ENCODE measurements at regions of chr4 and their contacts with region 1.

Region 1: GRCh38 chr4:40199999-40200874 is 3.4 kb downstream of the RHOH start:
- DNase-seq: peak; percentile 62 to 87 (median 66)
- H3K4me3 ChIP-seq: peak overlapping the region; percentile 84 to 98
- H3K4me3 Mint-ChIP-seq: peak overlapping the region; percentile 95 to 100 (median 98)
- H3K27ac ChIP-seq: peak overlapping the region; percentile 99
- H3K27ac Mint-ChIP-seq: peak overlapping the region; percentile 98 to 100 (median 100)
- H3K4me1 ChIP-seq: peaks cover 44% of the 10 kb centered on the region
- H3K4me1 Mint-ChIP-seq: peaks cover 30 to 82% (median 38%) of the 10 kb centered on the region in 4 donors
- H3K27me3 ChIP-seq: no peaks in the 10 kb centered on the region
- H3K27me3 Mint-ChIP-seq: no peaks in the 10 kb centered on the region

Region 2: DNA sequence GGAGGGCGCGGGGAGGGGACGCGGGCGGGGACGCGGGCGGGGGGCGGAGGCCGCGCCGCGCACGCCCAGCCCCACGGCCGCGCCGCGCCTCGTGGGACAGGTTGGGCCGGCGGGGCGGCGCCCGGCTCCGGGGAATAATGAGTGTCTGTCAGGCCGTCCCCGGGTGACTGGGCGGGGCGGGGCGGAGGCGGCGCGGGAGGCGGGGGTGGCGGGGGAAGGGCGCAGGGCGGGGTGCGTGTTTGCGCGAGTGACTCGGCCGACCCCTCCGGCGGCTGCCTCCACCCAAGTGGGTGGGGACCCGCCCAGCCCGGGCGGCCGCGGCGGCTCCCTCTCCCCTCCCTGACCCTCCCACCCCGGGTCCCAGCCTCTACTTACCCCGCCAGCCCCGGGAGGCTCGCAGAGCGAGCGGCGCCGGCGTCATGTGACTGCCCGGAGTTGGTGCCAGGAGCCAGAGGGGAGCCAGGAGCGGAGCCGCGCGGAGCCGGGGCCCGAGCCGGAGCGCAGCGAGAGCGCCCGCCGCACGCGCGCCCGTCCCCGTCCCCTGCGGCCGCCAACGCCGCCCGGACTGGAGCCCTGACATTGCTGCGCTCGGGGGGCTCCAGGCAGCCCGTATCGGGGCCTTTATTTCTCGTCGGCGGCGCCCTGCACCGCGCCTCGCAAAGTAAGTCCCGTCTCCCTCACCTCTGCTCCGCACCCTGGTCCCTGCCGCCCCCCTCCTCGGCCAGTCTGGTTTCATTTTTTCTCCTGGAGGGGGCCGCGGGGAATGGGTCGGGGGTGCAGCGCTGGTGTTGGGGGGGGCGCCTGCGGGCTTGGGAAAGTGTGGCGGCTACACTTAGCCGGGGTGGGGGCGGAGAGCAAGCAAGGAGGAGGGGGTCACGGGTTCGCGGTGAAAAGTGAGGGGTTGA is 1536.2 kb before region 1 on chr4 and contains the start of gene KLF3:
- CTCF ChIA-PET with region 1: no interaction called
- POLR2A ChIA-PET with region 1: interaction called, 3 read pairs
- intact Hi-C with region 1: loop called (anchors 10 kb)
- DNase-seq: peak; percentile 93 to 96 (median 94)
- H3K4me3 ChIP-seq: peak within 1 kb of the TSS; percentile 83 to 92
- H3K4me3 Mint-ChIP-seq: peak within 1 kb of the TSS; percentile 89 to 100 (median 98)
- H3K27ac ChIP-seq: peak within 1 kb of the TSS; percentile 92
- H3K27ac Mint-ChIP-seq: peak within 1 kb of the TSS; percentile 91 to 100 (median 99)
- H3K4me1 ChIP-seq: peaks cover 46% of the 10 kb centered on the region
- H3K4me1 Mint-ChIP-seq: peaks cover 40 to 80% (median 56%) of the 10 kb centered on the region in 4 donors
- H3K27me3 ChIP-seq: no peaks in the 10 kb centered on the region
- H3K27me3 Mint-ChIP-seq: no peaks in the 10 kb centered on the region
- total RNA-seq, gene KLF3: 119 to 122 TPM

Region 3: DNA sequence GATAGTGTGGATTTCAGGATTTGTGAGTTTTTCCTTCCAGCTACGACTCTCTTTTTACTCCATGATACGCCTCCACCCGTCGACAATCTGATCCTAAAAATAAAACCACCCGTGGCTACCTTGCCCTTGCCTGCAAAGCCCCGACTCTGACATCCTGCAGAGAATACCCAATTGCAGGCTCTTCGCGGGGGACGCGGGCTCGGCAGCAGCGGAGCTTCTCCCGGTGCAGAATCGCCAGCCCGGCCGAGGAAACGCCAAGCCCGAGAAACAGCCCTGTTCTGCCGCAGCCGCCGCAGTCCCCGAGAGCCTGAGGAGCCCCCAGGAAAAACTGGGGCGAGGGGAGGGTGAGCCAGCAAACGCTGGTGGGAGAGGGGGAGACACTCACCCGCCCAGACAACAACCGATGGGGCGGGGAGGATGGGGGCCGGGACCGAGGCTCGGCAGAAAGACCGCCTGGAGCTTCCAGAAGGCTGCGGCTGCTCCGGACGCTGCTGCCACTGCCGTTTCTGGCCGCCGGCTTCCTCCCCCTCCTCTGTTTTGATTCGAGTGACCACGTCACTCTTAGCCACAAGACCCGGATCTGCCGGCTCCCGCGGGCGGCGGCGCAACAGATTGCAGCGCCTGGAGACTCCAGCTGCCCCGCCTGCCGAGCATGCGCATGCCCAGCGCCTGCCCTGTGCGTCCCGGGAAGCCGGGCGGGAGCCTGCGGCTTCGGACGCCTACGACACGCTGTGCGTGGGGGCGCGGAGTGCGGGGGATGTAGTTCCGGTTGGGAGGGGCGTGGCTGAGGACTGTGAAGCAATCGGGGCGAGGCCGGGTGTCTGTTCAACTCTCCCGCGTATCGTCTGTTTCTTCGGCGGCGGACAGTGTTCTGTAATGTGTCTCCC is 561.6 kb before region 1 on chr4 and contains the start of gene SMIM14:
- CTCF ChIA-PET with region 1: no interaction called
- POLR2A ChIA-PET with region 1: no interaction called
- intact Hi-C with region 1: loop called (anchors 10 kb)
- DNase-seq: peak; percentile 84 to 91 (median 86)
- H3K4me3 ChIP-seq: peak within 1 kb of the TSS; percentile 52 to 95
- H3K4me3 Mint-ChIP-seq: peak within 1 kb of the TSS; percentile 87 to 99 (median 92)
- H3K27ac ChIP-seq: peak within 1 kb of the TSS; percentile 77
- H3K27ac Mint-ChIP-seq: peak within 1 kb of the TSS; percentile 74 to 98 (median 96)
- H3K4me1 ChIP-seq: peaks cover 27% of the 10 kb centered on the region
- H3K4me1 Mint-ChIP-seq: peaks cover 20 to 54% (median 32%) of the 10 kb centered on the region in 4 donors
- H3K27me3 ChIP-seq: no peaks in the 10 kb centered on the region
- H3K27me3 Mint-ChIP-seq: no peaks in the 10 kb centered on the region
- total RNA-seq, gene SMIM14: 15.5 to 19.4 TPM

Region 4: DNA sequence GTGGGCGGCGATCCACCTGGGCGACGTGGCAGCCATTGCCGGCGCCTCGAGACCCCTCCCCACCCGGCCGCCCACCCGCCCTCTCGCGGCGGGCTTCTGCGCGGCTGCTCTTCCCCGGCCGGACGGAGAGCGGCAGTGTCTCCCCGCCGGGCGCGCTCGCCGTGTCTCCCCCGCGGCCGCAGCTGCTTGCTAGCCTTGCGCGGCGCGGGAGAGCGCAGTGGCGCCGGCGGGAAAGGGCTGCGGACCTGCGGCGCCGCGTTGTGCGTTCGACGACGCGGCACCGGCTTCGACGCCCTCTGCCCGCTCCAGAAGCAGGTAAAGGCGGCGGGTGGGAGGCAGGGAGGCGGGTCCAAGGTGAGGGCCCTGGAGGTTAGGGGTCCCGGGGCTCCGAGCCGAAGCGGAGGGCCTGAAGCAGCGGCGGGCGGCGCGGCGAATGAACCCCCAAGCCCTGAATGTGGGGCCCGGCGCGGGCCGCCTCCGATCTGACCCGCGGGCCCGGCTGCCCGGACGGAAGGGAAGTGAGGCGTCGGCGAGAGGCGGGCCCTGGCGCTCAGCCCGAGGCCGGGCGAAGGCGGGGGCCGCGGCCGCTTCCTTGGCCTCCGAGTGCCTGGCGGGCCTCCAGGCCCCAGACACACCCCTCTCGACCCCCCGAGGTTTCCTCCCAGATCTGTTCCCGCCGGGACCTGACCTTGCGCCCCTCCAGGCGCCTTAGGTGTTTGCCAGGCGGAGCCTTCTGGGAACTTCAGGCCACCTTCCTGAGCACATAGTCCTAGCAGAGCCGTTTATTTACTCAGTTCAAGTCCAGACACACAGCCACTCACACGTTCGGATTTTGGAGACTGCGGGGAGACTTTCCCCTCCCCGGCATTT is 143.3 kb before region 1 on chr4 and contains the start of gene N4BP2:
- CTCF ChIA-PET with region 1: interaction called, 3 read pairs
- POLR2A ChIA-PET with region 1: interaction called, 28 read pairs
- intact Hi-C with region 1: loop called (anchors 5 kb)
- DNase-seq: peak; percentile 60 to 78 (median 75)
- H3K4me3 ChIP-seq: peak within 1 kb of the TSS; percentile 82 to 100
- H3K4me3 Mint-ChIP-seq: peak within 1 kb of the TSS; percentile 93 to 99 (median 97)
- H3K27ac ChIP-seq: peak within 1 kb of the TSS; percentile 75
- H3K27ac Mint-ChIP-seq: peak within 1 kb of the TSS; percentile 93 to 99 (median 97)
- H3K4me1 ChIP-seq: peaks cover 36% of the 10 kb centered on the region
- H3K4me1 Mint-ChIP-seq: peaks cover 18 to 48% (median 32%) of the 10 kb centered on the region in 4 donors
- H3K27me3 ChIP-seq: no peaks in the 10 kb centered on the region
- H3K27me3 Mint-ChIP-seq: no peaks in the 10 kb centered on the region
- total RNA-seq, gene N4BP2: 15.0 to 16.7 TPM

Region 5: DNA sequence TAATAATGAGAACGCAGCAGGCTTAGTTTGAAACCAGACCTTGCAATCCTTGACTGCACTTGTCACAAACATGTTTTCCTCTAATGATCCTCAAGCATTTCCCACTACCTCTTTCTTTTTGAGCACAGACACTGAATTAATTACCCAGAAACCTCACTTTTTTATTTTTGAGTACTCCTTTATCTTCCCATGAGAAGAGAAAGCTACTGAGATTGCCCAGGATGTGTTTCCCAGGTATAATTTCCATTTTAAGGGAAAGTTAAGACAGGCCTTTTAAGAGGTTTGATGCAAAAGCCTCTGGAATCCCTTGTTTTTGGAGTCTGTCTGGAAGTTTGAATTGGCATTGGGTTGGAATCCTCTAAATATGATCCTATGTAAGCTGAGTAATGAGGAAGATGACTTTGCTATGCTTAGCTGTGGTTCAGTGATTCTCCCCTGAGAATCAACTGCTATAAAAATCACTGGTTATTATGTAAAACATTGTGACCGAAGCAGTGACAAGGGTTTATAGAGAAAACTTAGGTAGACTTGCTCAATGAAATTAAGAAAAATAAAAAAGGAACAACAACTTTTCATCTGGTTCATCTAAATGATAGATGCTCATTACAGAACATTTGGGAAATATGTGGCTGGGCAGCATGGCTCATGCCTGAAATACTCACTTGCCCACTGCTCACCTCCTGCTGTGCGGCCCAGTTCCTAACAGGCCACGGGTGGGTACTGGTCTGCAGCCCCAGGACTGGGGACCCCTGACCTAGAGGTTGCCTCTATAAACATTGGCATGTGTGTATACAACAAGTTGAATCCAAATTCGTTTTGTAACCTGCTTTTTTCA is 14.2 kb before region 1 on chr4:
- CTCF ChIA-PET with region 1: interaction called, 8 read pairs
- POLR2A ChIA-PET with region 1: interaction called, 357 read pairs
- intact Hi-C with region 1: no loop called
- DNase-seq: no peak
- H3K4me3 ChIP-seq: no peak overlapping the region
- H3K4me3 Mint-ChIP-seq: peak overlapping the region in 2 of 8 donors; percentile 20 to 26
- H3K27ac ChIP-seq: no peak overlapping the region
- H3K27ac Mint-ChIP-seq: peak overlapping the region in 3 of 7 donors; percentile 32 to 71 (median 57)
- H3K4me1 ChIP-seq: peaks cover 44% of the 10 kb centered on the region
- H3K4me1 Mint-ChIP-seq: peaks cover 31 to 45% (median 36%) of the 10 kb centered on the region in 4 donors
- H3K27me3 ChIP-seq: no peaks in the 10 kb centered on the region
- H3K27me3 Mint-ChIP-seq: no peaks in the 10 kb centered on the region

Region 6: DNA sequence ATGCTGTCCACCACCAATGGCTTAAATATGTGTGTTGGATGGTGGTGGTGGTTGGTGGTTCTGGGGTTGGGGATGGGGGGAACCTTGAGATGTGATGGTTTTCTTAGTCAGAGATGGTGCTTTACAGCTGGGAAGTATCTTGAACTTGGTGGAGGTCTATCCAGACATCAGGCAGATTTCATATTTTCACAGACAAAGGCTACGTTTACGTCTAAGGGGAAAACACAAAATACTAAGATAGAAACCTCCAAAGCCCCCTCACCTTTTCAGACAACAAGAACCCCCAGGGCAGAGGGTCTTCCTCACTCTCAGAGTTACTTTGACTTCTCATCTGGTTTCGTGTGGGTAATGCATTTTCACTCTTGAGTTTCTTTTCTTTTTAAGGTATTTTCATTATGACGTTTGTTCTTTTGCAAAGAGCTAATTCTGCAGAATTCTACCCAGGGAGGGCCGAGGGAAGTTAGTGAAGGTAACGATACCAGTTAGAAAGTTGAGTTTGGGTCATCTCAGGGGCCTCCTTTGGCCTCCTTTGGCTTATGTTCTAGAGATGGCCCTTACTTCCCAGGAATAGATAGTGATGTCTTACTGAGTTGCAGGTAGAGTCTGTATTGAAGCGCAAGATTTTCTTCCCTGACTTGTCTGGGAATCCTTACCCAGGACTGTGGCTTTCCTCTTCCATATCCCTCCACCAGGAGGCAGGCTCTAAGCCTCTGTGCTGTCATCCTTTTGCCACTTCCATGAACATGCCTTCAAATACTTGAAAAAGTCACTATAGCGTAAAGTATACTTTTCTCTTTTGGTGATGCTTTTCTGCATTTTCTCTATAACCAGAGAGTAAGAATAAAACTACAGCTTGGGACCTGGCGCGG is 28.5 kb after region 1 on chr4:
- CTCF ChIA-PET with region 1: interaction called, 93 read pairs
- POLR2A ChIA-PET with region 1: interaction called, 1,182 read pairs
- intact Hi-C with region 1: loop called (anchors 1 kb)
- DNase-seq: no peak
- H3K4me3 ChIP-seq: peak overlapping the region in 1 of 2 donors; percentile 33
- H3K4me3 Mint-ChIP-seq: peak overlapping the region; percentile 69 to 93 (median 77)
- H3K27ac ChIP-seq: peak overlapping the region; percentile 72
- H3K27ac Mint-ChIP-seq: peak overlapping the region; percentile 92 to 100 (median 93)
- H3K4me1 ChIP-seq: peaks cover 100% of the 10 kb centered on the region
- H3K4me1 Mint-ChIP-seq: peaks cover 68 to 98% (median 84%) of the 10 kb centered on the region in 4 donors
- H3K27me3 ChIP-seq: no peaks in the 10 kb centered on the region
- H3K27me3 Mint-ChIP-seq: no peaks in the 10 kb centered on the region

Region 7: DNA sequence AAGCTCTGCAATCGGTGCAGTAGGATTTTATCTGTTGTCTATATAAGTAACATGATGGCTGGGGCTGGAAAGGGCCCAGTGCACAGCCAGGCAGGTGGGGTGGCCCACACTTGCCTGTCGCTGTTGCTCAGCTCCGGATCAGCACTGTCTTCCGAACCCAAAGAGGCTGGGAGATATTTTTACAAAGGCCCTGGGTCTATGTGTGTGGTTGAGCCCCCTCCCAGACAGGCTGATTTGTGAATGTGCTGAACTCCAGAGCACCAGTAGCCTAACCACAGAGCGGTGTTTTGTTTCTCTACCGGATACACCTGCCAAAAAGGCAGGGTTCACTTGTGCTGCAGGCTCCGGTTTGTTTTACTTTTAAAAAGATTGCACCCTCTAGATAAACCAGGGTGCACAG is 101.4 kb after region 1 on chr4:
- CTCF ChIA-PET with region 1: interaction called, 115 read pairs
- POLR2A ChIA-PET with region 1: interaction called, 179 read pairs
- intact Hi-C with region 1: no loop called
- DNase-seq: peak; percentile 82 to 90 (median 89)
- H3K4me3 ChIP-seq: peak overlapping the region in 1 of 2 donors; percentile 2
- H3K4me3 Mint-ChIP-seq: peak overlapping the region; percentile 23 to 92 (median 78)
- H3K27ac ChIP-seq: peak overlapping the region; percentile 62
- H3K27ac Mint-ChIP-seq: peak overlapping the region in 6 of 7 donors; percentile 96 to 99 (median 97)
- H3K4me1 ChIP-seq: peaks cover 94% of the 10 kb centered on the region
- H3K4me1 Mint-ChIP-seq: peaks cover 66 to 90% (median 79%) of the 10 kb centered on the region in 4 donors
- H3K27me3 ChIP-seq: no peaks in the 10 kb centered on the region
- H3K27me3 Mint-ChIP-seq: no peaks in the 10 kb centered on the region